ENCODE measurements at regions of chr9 and their contacts with region 1.

Region 1: DNA sequence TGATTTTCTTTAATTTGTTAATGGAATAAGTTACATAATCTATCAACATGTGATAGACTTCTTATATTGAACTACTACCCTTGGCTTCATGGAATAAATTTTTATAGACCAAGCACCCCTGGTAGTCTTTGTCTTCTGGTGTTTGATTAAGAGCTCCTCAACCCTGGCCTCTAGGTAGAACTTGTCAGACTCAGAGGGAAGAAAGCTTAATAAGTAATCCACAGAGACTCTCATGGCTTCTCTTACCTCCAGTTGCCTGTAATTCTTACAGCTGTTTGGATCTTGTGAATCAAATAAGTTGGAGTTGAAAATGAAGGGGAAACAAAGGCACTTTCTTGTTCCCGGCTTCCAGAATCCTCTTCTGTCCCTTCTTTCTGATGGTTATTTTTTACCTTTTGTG is 7.0 kb upstream of the GPR21 start:
- DNase-seq: no peak
- H3K4me3 ChIP-seq: no peak overlapping the region
- H3K27me3 ChIP-seq: no peaks in the 10 kb centered on the region
- CTCF ChIP-seq: no peak

Region 2: GRCh38 chr9:123011878-123012528 is 14.4 kb before region 1 on chr9:
- CTCF ChIA-PET with region 1: no interaction called
- POLR2A ChIA-PET with region 1: interaction called, 12 read pairs
- DNase-seq: no peak
- H3K4me3 ChIP-seq: no peak overlapping the region
- H3K27me3 ChIP-seq: no peaks in the 10 kb centered on the region
- CTCF ChIP-seq: no peak

Region 3: DNA sequence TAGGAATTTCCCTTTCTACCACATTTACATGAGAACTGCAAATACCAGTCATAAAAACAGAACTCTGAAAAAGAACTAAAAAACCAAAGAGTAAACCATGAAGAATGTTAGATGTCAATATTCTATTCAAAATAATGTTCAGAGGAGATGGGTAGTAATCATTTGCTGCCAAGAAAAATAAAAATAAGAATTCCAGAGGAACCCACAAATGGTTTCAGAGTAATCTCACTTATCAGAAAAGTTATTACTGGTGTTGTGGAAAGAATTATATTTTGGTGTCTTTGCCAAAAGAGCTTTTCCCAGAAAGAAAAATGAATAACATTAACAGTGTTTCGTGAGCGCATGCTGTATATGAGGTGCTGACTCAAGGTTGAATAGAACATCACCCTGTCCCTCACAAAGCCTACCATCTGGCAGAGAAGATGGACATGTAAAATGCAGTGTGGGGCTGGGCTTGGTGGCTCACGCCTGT is 42.6 kb after region 1 on chr9:
- CTCF ChIA-PET with region 1: no interaction called
- POLR2A ChIA-PET with region 1: no interaction called
- DNase-seq: peak; percentile 94
- H3K4me3 ChIP-seq: no peak overlapping the region
- H3K27me3 ChIP-seq: no peaks in the 10 kb centered on the region
- CTCF ChIP-seq: no peak

Measured in BJ (cell line).